SK-N-SH (cell line): ENCODE measurements at regions of chr15 and their contacts with region 1.

Region 1: GRCh38 chr15:38707802-38708671 is 143.4 kb upstream of the RASGRP1 start:
- DNase-seq: peak; percentile 44
- H3K4me3 ChIP-seq: no peak overlapping the region
- H3K27ac ChIP-seq: peak overlapping the region; percentile 18 to 36; a peak in 1 of 4 replicates
- H3K4me1 ChIP-seq: no peaks in the 10 kb centered on the region; a peak in 2 of 4 replicates
- H3K27me3 ChIP-seq: no peaks in the 10 kb centered on the region
- CTCF ChIP-seq: peak; percentile 85
- EP300 ChIP-seq: no peak
- RAD21 ChIP-seq: peak; percentile 98

Region 2: DNA sequence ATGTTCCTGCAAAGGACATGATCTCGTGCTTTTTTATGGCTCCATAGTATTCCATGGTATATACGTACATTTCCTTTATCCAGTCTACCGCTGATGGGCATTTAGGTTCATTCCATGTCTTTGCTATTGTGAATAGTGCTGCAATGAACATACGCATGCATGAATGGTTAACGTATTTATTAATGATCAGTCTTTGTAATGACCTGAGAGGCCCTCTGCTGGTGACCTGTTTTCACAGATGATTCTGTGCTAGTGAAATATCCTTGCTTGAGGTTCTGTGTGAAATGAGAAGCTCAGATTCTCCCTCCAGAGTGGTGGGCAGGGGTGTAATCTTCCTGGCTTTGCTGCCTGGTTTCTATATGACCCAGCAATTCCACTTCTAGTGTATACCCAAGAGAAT is 16.8 kb after region 1 on chr15:
- CTCF ChIA-PET with region 1: interaction called, 22 read pairs
- POLR2A ChIA-PET with region 1: no interaction called
- DNase-seq: no peak
- H3K4me3 ChIP-seq: no peak overlapping the region
- H3K27ac ChIP-seq: no peak overlapping the region
- H3K4me1 ChIP-seq: no peaks in the 10 kb centered on the region
- H3K27me3 ChIP-seq: no peaks in the 10 kb centered on the region
- CTCF ChIP-seq: no peak; the same call in 1 of the 2 replicates
- EP300 ChIP-seq: no peak
- RAD21 ChIP-seq: no peak

Region 3: DNA sequence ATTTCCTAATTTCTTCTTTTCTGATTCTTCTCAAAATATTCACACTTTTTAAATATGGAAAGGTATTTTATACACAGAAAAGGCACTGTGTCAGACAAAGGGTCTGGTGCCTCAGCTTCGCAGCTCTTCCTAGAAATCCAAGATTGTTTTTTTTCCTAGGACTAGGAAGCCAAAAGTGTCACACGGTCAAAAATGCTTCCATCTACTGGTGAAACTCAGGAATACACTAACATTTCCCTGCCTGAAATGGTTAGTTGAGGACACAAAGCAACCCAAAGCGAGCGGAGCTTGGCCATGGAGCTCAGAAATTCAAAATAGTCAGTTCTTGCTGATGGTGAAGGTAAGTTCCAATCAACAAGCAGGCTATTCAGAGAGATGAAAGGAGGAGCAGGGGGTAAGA is 283.1 kb after region 1 on chr15:
- CTCF ChIA-PET with region 1: interaction called, 11 read pairs
- POLR2A ChIA-PET with region 1: no interaction called
- DNase-seq: peak; percentile 36
- H3K4me3 ChIP-seq: no peak overlapping the region
- H3K27ac ChIP-seq: peak overlapping the region; percentile 16 to 48
- H3K4me1 ChIP-seq: peaks cover 9 to 18% of the 10 kb centered on the region in 2 experiments; a peak in 3 of 4 replicates
- H3K27me3 ChIP-seq: no peaks in the 10 kb centered on the region
- CTCF ChIP-seq: peak; percentile 64
- EP300 ChIP-seq: no peak
- RAD21 ChIP-seq: peak; percentile 71